Endothelial cell of umbilical vein (primary cell): ENCODE measurements at regions of chr2 and their contacts with region 1.

Region 1: GRCh38 chr2:159168707-159169106 is 117.8 kb downstream of the WDSUB1 start:
- DNase-seq: peak; percentile 65
- H3K4me3 ChIP-seq: no peak overlapping the region
- H3K27ac ChIP-seq: peak overlapping the region; percentile 48
- H3K4me1 ChIP-seq: peaks cover 20% of the 10 kb centered on the region
- H3K27me3 ChIP-seq: no peaks in the 10 kb centered on the region
- CTCF ChIP-seq: peak; percentile 36 to 56
- POLR2A ChIP-seq: no peak

Region 2: GRCh38 chr2:158968396-158969161 is 200.1 kb before region 1 on chr2 and contains the start of gene TANC1:
- CTCF ChIA-PET with region 1: interaction called, 8 read pairs
- POLR2A ChIA-PET with region 1: no interaction called
- dilution Hi-C with region 1: no loop called
- intact Hi-C with region 1: loop called (anchors 5 kb)
- DNase-seq: peak; percentile 90
- H3K4me3 ChIP-seq: peak within 1 kb of the TSS; percentile 80 to 89 (median 89)
- H3K27ac ChIP-seq: peak within 1 kb of the TSS; percentile 75
- H3K4me1 ChIP-seq: peaks cover 36% of the 10 kb centered on the region
- H3K27me3 ChIP-seq: no peaks in the 10 kb centered on the region
- CTCF ChIP-seq: no peak
- POLR2A ChIP-seq: peak; percentile 96
- total RNA-seq, gene TANC1: 86.3 and 99.4 TPM in 2 replicates

Region 3: GRCh38 chr2:159010340-159010739 is 158.4 kb before region 1 on chr2:
- CTCF ChIA-PET with region 1: no interaction called
- POLR2A ChIA-PET with region 1: no interaction called
- dilution Hi-C with region 1: no loop called
- intact Hi-C with region 1: no loop called
- DNase-seq: peak; percentile 52
- H3K4me3 ChIP-seq: no peak overlapping the region
- H3K27ac ChIP-seq: no peak overlapping the region
- H3K4me1 ChIP-seq: peaks cover 9% of the 10 kb centered on the region
- H3K27me3 ChIP-seq: no peaks in the 10 kb centered on the region
- CTCF ChIP-seq: no peak
- POLR2A ChIP-seq: no peak

Region 4: DNA sequence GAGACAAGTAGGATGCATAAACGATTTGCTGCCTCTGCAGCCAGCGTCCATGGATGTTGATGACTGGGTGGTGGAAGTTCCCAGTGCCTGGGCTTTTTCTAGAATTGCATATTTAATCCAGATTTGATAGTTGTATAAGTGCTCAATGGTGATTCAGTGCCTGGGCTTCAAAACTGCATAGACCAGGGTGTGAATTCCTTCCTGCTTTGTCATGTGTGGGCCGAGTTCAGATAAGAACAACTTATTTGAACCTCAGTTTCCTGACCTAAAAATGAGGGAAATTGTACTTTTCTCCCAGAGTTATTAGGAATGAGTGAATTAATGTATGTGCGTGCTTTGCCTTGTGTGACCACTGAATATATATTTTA is 36.8 kb before region 1 on chr2:
- CTCF ChIA-PET with region 1: interaction called, 12 read pairs
- POLR2A ChIA-PET with region 1: no interaction called
- dilution Hi-C with region 1: no loop called
- intact Hi-C with region 1: loop called (anchors 1 kb)
- DNase-seq: peak; percentile 91
- H3K4me3 ChIP-seq: no peak overlapping the region
- H3K27ac ChIP-seq: peak overlapping the region; percentile 80
- H3K4me1 ChIP-seq: peaks cover 69% of the 10 kb centered on the region
- H3K27me3 ChIP-seq: no peaks in the 10 kb centered on the region
- CTCF ChIP-seq: no peak
- POLR2A ChIP-seq: peak; percentile 51

Region 5: DNA sequence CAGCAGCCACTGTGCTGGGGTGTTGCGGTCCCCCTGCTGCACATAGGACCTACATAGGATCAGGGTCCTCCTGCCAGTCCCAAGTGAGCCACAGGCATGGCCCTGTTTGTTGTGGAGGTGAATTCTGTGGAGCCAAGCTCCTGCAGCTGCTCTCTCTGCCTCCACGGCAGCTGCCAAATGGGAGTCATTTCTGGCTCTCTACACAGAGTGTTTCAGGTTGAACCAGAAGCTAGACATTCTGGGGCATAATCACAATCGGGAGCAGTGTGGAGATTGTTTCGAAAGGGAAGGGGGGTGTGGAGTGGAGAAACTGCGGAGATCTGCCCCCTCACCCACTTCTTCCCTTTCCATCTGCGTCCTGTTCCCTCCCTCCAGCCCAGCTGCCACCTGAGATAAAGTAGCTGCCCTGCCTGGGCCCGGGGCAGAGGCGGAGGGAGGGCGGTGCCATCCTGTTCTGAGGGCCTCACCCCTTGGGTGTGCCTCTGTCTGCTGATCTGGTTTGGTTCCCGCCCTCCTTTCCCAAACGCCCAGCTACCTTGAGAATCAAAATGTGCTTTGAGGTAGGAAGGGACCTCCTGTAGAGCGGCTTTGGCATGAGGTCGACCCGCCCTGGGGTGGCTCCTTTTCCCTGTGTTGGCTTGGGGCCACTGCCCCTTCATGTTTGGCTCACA is 21.6 kb before region 1 on chr2:
- CTCF ChIA-PET with region 1: interaction called, 17 read pairs
- POLR2A ChIA-PET with region 1: no interaction called
- dilution Hi-C with region 1: no loop called
- intact Hi-C with region 1: loop called (anchors 1 kb)
- DNase-seq: peak; percentile 72
- H3K4me3 ChIP-seq: no peak overlapping the region
- H3K27ac ChIP-seq: peak overlapping the region; percentile 13
- H3K4me1 ChIP-seq: peaks cover 41% of the 10 kb centered on the region
- H3K27me3 ChIP-seq: no peaks in the 10 kb centered on the region
- CTCF ChIP-seq: no peak
- POLR2A ChIP-seq: no peak